HAP-1 (cell line): ENCODE measurements at regions of chr5 and their contacts with region 1.

Region 1: GRCh38 chr5:119411935-119412602 is 40.2 kb upstream of the HSD17B4 start:
- DNase-seq: peak; percentile 68 to 71
- H3K4me3 ChIP-seq: peak overlapping the region; percentile 26
- H3K4me1 ChIP-seq: peaks cover 7% of the 10 kb centered on the region
- H3K27me3 ChIP-seq: no peaks in the 10 kb centered on the region

Region 2: GRCh38 chr5:118987988-118988865 is 423.8 kb before region 1 on chr5 and contains the start of gene DTWD2:
- in situ Hi-C with region 1: loop called (anchors 10 kb)
- DNase-seq: peak; percentile 94 to 96
- H3K4me3 ChIP-seq: peak within 1 kb of the TSS; percentile 74
- H3K4me1 ChIP-seq: peaks cover 10% of the 10 kb centered on the region
- H3K27me3 ChIP-seq: no peaks in the 10 kb centered on the region